B cell (primary cell): ENCODE measurements at regions of chr15 and their contacts with region 1.

Region 1: GRCh38 chr15:84748274-84749110 is at the start of gene ZNF592:
- DNase-seq: peak; percentile 90
- ATAC-seq: peak; percentile 66
- H3K4me3 ChIP-seq: peak within 1 kb of the TSS; percentile 69 to 93 (median 79)
- H3K4me3 Mint-ChIP-seq: peak within 1 kb of the TSS; percentile 100
- H3K27ac ChIP-seq: peak within 1 kb of the TSS; percentile 86 to 97
- H3K27ac Mint-ChIP-seq: peak within 1 kb of the TSS; percentile 98
- H3K4me1 ChIP-seq: peaks cover 52 to 65% of the 10 kb centered on the region in 2 donors
- H3K4me1 Mint-ChIP-seq: peaks cover 66% of the 10 kb centered on the region
- H3K27me3 ChIP-seq: no peaks in the 10 kb centered on the region
- H3K27me3 Mint-ChIP-seq: no peaks in the 10 kb centered on the region
- CTCF ChIP-seq: no peak
- total RNA-seq, gene ZNF592: 59.5 and 64.4 TPM in 2 replicates

Region 2: GRCh38 chr15:84552896-84553295 is 195.6 kb before region 1 on chr15:
- CTCF ChIA-PET with region 1: no interaction called
- POLR2A ChIA-PET with region 1: no interaction called
- intact Hi-C with region 1: no loop called
- DNase-seq: no peak
- ATAC-seq: no peak
- H3K4me3 ChIP-seq: no peak overlapping the region
- H3K4me3 Mint-ChIP-seq: no peak overlapping the region
- H3K27ac ChIP-seq: no peak overlapping the region
- H3K27ac Mint-ChIP-seq: no peak overlapping the region
- H3K4me1 ChIP-seq: no peaks in the 10 kb centered on the region
- H3K4me1 Mint-ChIP-seq: no peaks in the 10 kb centered on the region
- H3K27me3 ChIP-seq: no peaks in the 10 kb centered on the region
- H3K27me3 Mint-ChIP-seq: no peaks in the 10 kb centered on the region
- CTCF ChIP-seq: no peak

Region 3: GRCh38 chr15:84600851-84601838 is 147.3 kb before region 1 on chr15 and contains the start of gene ZSCAN2:
- CTCF ChIA-PET with region 1: interaction called, 8 read pairs
- POLR2A ChIA-PET with region 1: no interaction called
- intact Hi-C with region 1: loop called (anchors 2 kb)
- DNase-seq: peak; percentile 93
- ATAC-seq: peak; percentile 94
- H3K4me3 ChIP-seq: peak within 1 kb of the TSS; percentile 78 to 95 (median 86)
- H3K4me3 Mint-ChIP-seq: peak within 1 kb of the TSS; percentile 99
- H3K27ac ChIP-seq: peak within 1 kb of the TSS; percentile 32 to 47
- H3K27ac Mint-ChIP-seq: peak within 1 kb of the TSS; percentile 96
- H3K4me1 ChIP-seq: peaks cover 29 to 52% of the 10 kb centered on the region in 2 donors
- H3K4me1 Mint-ChIP-seq: peaks cover 64% of the 10 kb centered on the region
- H3K27me3 ChIP-seq: no peaks in the 10 kb centered on the region
- H3K27me3 Mint-ChIP-seq: no peaks in the 10 kb centered on the region
- CTCF ChIP-seq: no peak
- total RNA-seq, gene ZSCAN2: 16.2 and 18.6 TPM in 2 replicates

Region 4: GRCh38 chr15:84633311-84634227 is 114.9 kb before region 1 on chr15:
- CTCF ChIA-PET with region 1: interaction called, 3 read pairs
- POLR2A ChIA-PET with region 1: interaction called, 4 read pairs
- intact Hi-C with region 1: loop called (anchors 1 kb)
- DNase-seq: peak; percentile 82
- ATAC-seq: peak; percentile 56
- H3K4me3 ChIP-seq: peak overlapping the region; percentile 61 to 71 (median 65)
- H3K4me3 Mint-ChIP-seq: peak overlapping the region; percentile 97
- H3K27ac ChIP-seq: peak overlapping the region; percentile 50 to 71
- H3K27ac Mint-ChIP-seq: peak overlapping the region; percentile 95
- H3K4me1 ChIP-seq: peaks cover 26 to 41% of the 10 kb centered on the region in 2 donors
- H3K4me1 Mint-ChIP-seq: peaks cover 41% of the 10 kb centered on the region
- H3K27me3 ChIP-seq: no peaks in the 10 kb centered on the region
- H3K27me3 Mint-ChIP-seq: no peaks in the 10 kb centered on the region
- CTCF ChIP-seq: no peak

Region 5: DNA sequence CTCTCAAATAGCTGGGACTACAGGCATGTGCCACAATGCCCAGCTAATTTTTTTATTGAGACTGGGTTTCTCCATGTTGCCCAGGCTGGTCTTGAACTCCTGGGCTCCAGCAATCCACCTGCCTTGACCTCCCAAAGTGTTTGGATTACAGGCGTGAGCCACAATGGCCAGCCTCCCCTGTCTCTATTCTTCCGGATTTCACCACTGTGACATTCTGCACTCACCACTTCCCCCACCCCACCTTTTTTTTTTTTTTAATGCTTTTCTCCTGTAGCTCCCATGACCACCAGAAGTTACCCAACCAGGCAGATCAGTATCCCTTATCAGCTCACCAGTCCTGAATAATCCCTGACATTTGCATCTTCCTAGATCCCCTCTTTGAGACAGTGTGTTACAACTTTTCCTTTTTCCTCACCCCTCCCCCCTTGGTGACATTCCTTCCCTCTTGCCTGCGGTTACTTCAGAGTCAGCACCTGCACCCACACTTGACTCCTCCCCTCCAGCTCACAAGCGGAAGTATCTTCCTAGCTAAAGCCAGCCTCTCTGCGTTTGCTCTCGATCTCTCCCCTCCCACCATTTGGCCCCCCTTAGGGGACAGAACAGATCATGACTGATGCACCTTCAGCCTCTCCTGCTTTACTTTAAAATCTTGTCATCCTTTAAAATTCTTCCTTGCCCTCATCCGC is 13.6 kb before region 1 on chr15:
- CTCF ChIA-PET with region 1: interaction called, 21 read pairs
- POLR2A ChIA-PET with region 1: interaction called, 28 read pairs
- intact Hi-C with region 1: loop called (anchors 1 kb)
- DNase-seq: peak; percentile 91
- ATAC-seq: peak; percentile 91
- H3K4me3 ChIP-seq: peak overlapping the region; percentile 0 to 58 (median 39)
- H3K4me3 Mint-ChIP-seq: peak overlapping the region; percentile 77
- H3K27ac ChIP-seq: peak overlapping the region; percentile 45 to 61
- H3K27ac Mint-ChIP-seq: peak overlapping the region; percentile 87
- H3K4me1 ChIP-seq: peaks cover 39 to 55% of the 10 kb centered on the region in 2 donors
- H3K4me1 Mint-ChIP-seq: peaks cover 40% of the 10 kb centered on the region
- H3K27me3 ChIP-seq: no peaks in the 10 kb centered on the region
- H3K27me3 Mint-ChIP-seq: no peaks in the 10 kb centered on the region
- CTCF ChIP-seq: no peak